Caco-2 (cell line): ENCODE measurements at regions of chr6 and their contacts with region 1.

Region 1: GRCh38 chr6:111605100-111605751 is 452 bp downstream of the TRAF3IP2 start:
- DNase-seq: peak; percentile 58 to 59
- H3K4me3 ChIP-seq: peak overlapping the region; percentile 46
- H3K4me3 Mint-ChIP-seq: peak overlapping the region; percentile 90
- H3K27ac Mint-ChIP-seq: peak overlapping the region; percentile 91
- H3K4me1 ChIP-seq: peaks cover 22% of the 10 kb centered on the region
- H3K4me1 Mint-ChIP-seq: peaks cover 22% of the 10 kb centered on the region
- H3K27me3 ChIP-seq: no peaks in the 10 kb centered on the region
- H3K27me3 Mint-ChIP-seq: no peaks in the 10 kb centered on the region
- CTCF ChIP-seq: no peak

Region 2: GRCh38 chr6:111483736-111484632 is 121.2 kb before region 1 on chr6:
- CTCF ChIA-PET with region 1: no interaction called
- POLR2A ChIA-PET with region 1: interaction called, 3 read pairs
- intact Hi-C with region 1: loop called (anchors 1 kb)
- DNase-seq: peak; percentile 93 to 94
- H3K4me3 ChIP-seq: peak overlapping the region; percentile 61
- H3K4me3 Mint-ChIP-seq: peak overlapping the region; percentile 96
- H3K27ac Mint-ChIP-seq: peak overlapping the region; percentile 98
- H3K4me1 ChIP-seq: peaks cover 7% of the 10 kb centered on the region; the same call in 1 of the 2 replicates
- H3K4me1 Mint-ChIP-seq: peaks cover 14% of the 10 kb centered on the region
- H3K27me3 ChIP-seq: no peaks in the 10 kb centered on the region
- H3K27me3 Mint-ChIP-seq: no peaks in the 10 kb centered on the region
- CTCF ChIP-seq: no peak

Region 3: GRCh38 chr6:111589366-111589765 is 15.9 kb before region 1 on chr6:
- CTCF ChIA-PET with region 1: interaction called, 3 read pairs
- POLR2A ChIA-PET with region 1: no interaction called
- intact Hi-C with region 1: loop called (anchors 1 kb)
- DNase-seq: no peak
- H3K4me3 ChIP-seq: no peak overlapping the region
- H3K4me3 Mint-ChIP-seq: no peak overlapping the region
- H3K27ac Mint-ChIP-seq: peak overlapping the region; percentile 44
- H3K4me1 ChIP-seq: peaks cover 37% of the 10 kb centered on the region
- H3K4me1 Mint-ChIP-seq: peaks cover 42% of the 10 kb centered on the region
- H3K27me3 ChIP-seq: no peaks in the 10 kb centered on the region
- H3K27me3 Mint-ChIP-seq: no peaks in the 10 kb centered on the region
- CTCF ChIP-seq: no peak

Region 4: GRCh38 chr6:111642463-111643158 is 37.4 kb after region 1 on chr6:
- CTCF ChIA-PET with region 1: no interaction called
- POLR2A ChIA-PET with region 1: no interaction called
- intact Hi-C with region 1: loop called (anchors 2 kb)
- DNase-seq: peak in 1 of 2 experiments; percentile 55
- H3K4me3 ChIP-seq: no peak overlapping the region
- H3K4me3 Mint-ChIP-seq: no peak overlapping the region
- H3K27ac Mint-ChIP-seq: no peak overlapping the region
- H3K4me1 ChIP-seq: no peaks in the 10 kb centered on the region
- H3K4me1 Mint-ChIP-seq: no peaks in the 10 kb centered on the region
- H3K27me3 ChIP-seq: no peaks in the 10 kb centered on the region
- H3K27me3 Mint-ChIP-seq: no peaks in the 10 kb centered on the region
- CTCF ChIP-seq: peak in 1 of 2 experiments; percentile 44

Region 5: GRCh38 chr6:111677249-111677990 is 72.2 kb after region 1 on chr6:
- CTCF ChIA-PET with region 1: no interaction called
- POLR2A ChIA-PET with region 1: no interaction called
- intact Hi-C with region 1: loop called (anchors 2 kb)
- DNase-seq: peak in 1 of 2 experiments; percentile 30
- H3K4me3 ChIP-seq: no peak overlapping the region
- H3K4me3 Mint-ChIP-seq: no peak overlapping the region
- H3K27ac Mint-ChIP-seq: no peak overlapping the region
- H3K4me1 ChIP-seq: peaks cover 31% of the 10 kb centered on the region
- H3K4me1 Mint-ChIP-seq: peaks cover 17% of the 10 kb centered on the region
- H3K27me3 ChIP-seq: no peaks in the 10 kb centered on the region
- H3K27me3 Mint-ChIP-seq: no peaks in the 10 kb centered on the region
- CTCF ChIP-seq: no peak